Naive thymus-derived CD4-positive, alpha-beta T cell (primary cell): ENCODE measurements at regions of chr12 and their contacts with region 1.

Region 1: GRCh38 chr12:4421590-4422031 is 24.0 kb downstream of the FGF6 start:
- DNase-seq: peak in 7 of 9 donors; percentile 17 to 61 (median 39)
- ATAC-seq: peak; percentile 62
- H3K4me3 ChIP-seq: no peak overlapping the region
- H3K4me3 Mint-ChIP-seq: no peak overlapping the region
- H3K27ac ChIP-seq: no peak overlapping the region
- H3K27ac Mint-ChIP-seq: peak overlapping the region in 3 of 9 donors; percentile 34 to 50 (median 49)
- H3K4me1 ChIP-seq: no peaks in the 10 kb centered on the region
- H3K4me1 Mint-ChIP-seq: peaks cover 0 to 3% (median 0%) of the 10 kb centered on the region in 7 donors
- H3K27me3 ChIP-seq: no peaks in the 10 kb centered on the region
- H3K27me3 Mint-ChIP-seq: peaks cover 3 to 14% (median 9%) of the 10 kb centered on the region in 5 donors

Region 2: DNA sequence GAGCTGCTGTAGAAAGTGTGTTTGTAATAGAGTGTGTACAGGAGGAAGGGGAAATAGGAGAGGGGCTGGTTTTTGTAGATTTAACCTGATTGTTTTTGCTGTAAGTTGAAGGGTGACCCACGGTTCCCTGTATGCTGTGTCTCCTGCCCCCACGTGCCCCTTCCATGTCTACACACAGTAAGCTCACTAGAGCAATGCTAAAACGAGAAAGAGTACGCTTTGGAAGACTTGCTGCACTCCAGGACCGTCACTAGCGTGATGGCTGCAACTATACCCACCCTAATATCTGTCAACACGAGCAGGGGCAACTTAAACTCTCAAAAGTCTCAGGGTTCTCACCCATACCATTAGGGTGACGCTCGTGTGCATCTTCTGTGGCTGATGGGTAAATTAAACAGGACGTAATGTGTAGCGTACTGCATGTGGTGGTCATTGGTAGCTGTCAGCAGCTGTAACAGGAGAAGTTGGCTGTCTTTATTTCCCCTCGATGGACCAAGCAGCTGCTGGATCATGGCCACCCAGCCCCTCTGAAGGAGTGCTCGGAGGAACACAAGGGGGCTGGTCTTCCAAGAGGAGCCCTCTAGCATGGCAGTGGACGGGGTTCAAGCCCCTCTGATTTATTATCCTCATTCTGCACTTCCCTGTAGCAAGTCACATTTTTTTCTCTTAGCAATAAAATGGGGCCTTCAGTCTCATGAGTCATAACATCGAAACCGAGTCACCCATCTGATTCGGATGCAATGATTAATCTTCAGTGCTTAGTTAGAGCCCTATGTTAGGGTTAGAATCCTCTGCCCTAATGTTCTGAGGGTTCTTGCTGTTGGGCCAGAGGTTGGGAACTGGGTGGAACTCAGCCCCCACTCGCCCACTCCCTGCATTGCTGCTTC is 134.0 kb before region 1 on chr12:
- CTCF ChIA-PET with region 1: no interaction called
- POLR2A ChIA-PET with region 1: no interaction called
- intact Hi-C with region 1: no loop called
- DNase-seq: no peak
- ATAC-seq: peak; percentile 18
- H3K4me3 ChIP-seq: no peak overlapping the region
- H3K4me3 Mint-ChIP-seq: peak overlapping the region in 5 of 10 donors; percentile 26 to 53 (median 50)
- H3K27ac ChIP-seq: no peak overlapping the region
- H3K27ac Mint-ChIP-seq: peak overlapping the region; percentile 27 to 85 (median 77)
- H3K4me1 ChIP-seq: peaks cover 16 to 39% of the 10 kb centered on the region in 2 donors
- H3K4me1 Mint-ChIP-seq: peaks cover 72 to 95% (median 87%) of the 10 kb centered on the region in 7 donors
- H3K27me3 ChIP-seq: no peaks in the 10 kb centered on the region
- H3K27me3 Mint-ChIP-seq: no peaks in the 10 kb centered on the region

Region 3: GRCh38 chr12:4353785-4354208 is 67.8 kb before region 1 on chr12:
- CTCF ChIA-PET with region 1: no interaction called
- POLR2A ChIA-PET with region 1: no interaction called
- intact Hi-C with region 1: loop called in 1 of 2 experiments (anchors 1 kb)
- DNase-seq: peak in 7 of 9 donors; percentile 32 to 64 (median 53)
- ATAC-seq: peak; percentile 90
- H3K4me3 ChIP-seq: no peak overlapping the region
- H3K4me3 Mint-ChIP-seq: no peak overlapping the region
- H3K27ac ChIP-seq: no peak overlapping the region
- H3K27ac Mint-ChIP-seq: peak overlapping the region in 7 of 9 donors; percentile 14 to 71 (median 51)
- H3K4me1 ChIP-seq: no peaks in the 10 kb centered on the region
- H3K4me1 Mint-ChIP-seq: peaks cover 0 to 9% (median 4%) of the 10 kb centered on the region in 7 donors
- H3K27me3 ChIP-seq: no peaks in the 10 kb centered on the region
- H3K27me3 Mint-ChIP-seq: peaks cover 0 to 2% (median 0%) of the 10 kb centered on the region in 5 donors

Region 4: GRCh38 chr12:4506870-4507269 is 85.3 kb after region 1 on chr12:
- CTCF ChIA-PET with region 1: no interaction called
- POLR2A ChIA-PET with region 1: no interaction called
- intact Hi-C with region 1: loop called (anchors 1 to 2 kb)
- DNase-seq: peak in 7 of 9 donors; percentile 61 to 90 (median 84)
- ATAC-seq: peak; percentile 97
- H3K4me3 ChIP-seq: no peak overlapping the region
- H3K4me3 Mint-ChIP-seq: peak overlapping the region; percentile 12 to 75 (median 70)
- H3K27ac ChIP-seq: peak overlapping the region; percentile 62
- H3K27ac Mint-ChIP-seq: peak overlapping the region; percentile 78 to 95 (median 89)
- H3K4me1 ChIP-seq: peaks cover 13% of the 10 kb centered on the region in 2 donors
- H3K4me1 Mint-ChIP-seq: peaks cover 12 to 37% (median 28%) of the 10 kb centered on the region in 7 donors
- H3K27me3 ChIP-seq: no peaks in the 10 kb centered on the region
- H3K27me3 Mint-ChIP-seq: no peaks in the 10 kb centered on the region

Region 5: DNA sequence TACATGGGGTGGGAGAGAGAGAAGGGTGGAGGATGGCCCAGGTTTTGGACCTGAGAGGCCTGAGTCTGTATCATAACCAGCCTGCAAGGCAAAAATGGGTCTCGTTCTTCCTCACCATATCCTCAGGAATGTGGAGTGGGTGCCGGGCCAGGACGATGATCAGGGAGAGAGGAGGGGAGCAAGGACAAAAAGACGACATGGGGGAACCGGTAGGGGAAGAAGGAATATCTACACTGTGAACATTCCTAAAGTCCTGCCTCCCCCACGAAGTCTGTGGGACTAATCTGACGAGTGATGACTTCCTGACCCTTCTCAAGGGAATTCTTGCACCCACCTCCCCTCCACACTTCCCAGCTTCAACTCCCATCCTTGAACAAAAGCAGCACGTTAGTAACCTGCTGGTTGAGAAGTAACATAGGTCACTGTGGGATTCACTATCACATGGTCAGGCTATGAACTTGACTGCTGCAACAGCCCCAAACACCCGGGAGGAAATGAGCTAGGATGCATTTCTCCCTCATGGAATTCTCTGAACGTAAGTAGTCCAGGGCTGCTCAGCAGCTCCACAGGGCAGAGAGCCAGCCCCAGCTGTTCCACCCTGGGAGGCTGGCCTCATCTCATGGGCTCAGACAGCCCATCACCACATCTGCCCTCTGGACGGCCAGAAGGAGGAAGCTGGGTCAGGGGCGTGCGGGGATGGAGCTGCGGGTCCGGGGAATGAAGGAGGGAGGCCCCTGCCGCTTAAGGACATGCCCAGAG is 1739.7 kb after region 1 on chr12:
- CTCF ChIA-PET with region 1: no interaction called
- POLR2A ChIA-PET with region 1: no interaction called
- intact Hi-C with region 1: no loop called
- DNase-seq: no peak
- ATAC-seq: no peak
- H3K4me3 ChIP-seq: no peak overlapping the region
- H3K4me3 Mint-ChIP-seq: no peak overlapping the region
- H3K27ac ChIP-seq: no peak overlapping the region
- H3K27ac Mint-ChIP-seq: peak overlapping the region in 3 of 9 donors; percentile 38 to 54 (median 38)
- H3K4me1 ChIP-seq: no peaks in the 10 kb centered on the region
- H3K4me1 Mint-ChIP-seq: peaks cover 4 to 30% (median 10%) of the 10 kb centered on the region in 7 donors
- H3K27me3 ChIP-seq: no peaks in the 10 kb centered on the region
- H3K27me3 Mint-ChIP-seq: peaks cover 0 to 7% (median 0%) of the 10 kb centered on the region in 5 donors